ENCODE measurements at regions of chr3 and their contacts with region 1.

Region 1: DNA sequence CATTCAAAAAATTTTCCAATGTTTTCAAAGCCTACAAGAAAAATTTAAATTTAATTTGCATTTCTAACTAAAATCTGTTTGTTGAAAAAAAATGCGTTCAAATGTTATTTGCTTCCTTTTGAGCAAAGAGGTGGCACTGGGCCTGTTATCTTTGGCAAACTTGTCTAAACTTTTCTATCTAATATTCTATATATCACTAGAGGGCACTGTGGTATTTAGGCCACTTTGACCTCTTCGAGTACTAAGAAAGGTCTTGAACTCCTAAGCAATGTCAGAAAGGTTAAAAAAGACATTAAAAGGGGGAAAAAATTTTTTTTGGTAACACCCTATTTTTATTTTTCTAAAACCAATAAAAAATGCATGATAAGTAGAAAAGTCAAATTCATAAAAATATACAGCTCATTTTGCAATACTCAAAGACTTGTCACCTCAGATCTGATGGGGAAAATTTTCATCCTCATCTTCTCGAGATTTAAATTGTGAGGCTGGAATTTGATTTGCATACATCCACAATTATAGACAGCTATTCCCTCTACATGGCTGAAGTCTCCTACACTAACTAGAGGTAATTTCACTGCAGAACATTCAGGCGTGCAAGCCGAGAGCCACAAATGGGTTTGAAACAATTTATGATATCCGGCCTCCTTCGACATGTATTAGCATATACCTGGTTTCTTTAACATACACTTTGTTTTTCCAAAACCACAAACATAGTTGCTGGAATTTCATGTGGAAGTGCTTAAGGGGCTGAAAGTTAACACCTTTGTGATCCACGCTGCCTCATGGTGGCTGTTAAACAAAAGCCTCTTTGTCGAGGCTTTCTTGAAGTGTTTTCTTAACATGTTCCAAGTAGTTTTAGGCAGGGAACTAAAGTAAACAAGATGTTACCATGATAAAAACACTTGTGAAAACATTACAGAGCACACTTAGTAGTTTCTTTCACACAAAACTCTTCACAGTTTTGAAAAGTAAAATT is 576.4 kb downstream of the FOXP1 start:
- DNase-seq: peak in 2 of 3 donors; percentile 11 to 29
- H3K4me3 ChIP-seq: no peak overlapping the region
- H3K4me3 Mint-ChIP-seq: no peak overlapping the region
- H3K27ac ChIP-seq: no peak overlapping the region
- H3K27ac Mint-ChIP-seq: no peak overlapping the region
- H3K4me1 ChIP-seq: no peaks in the 10 kb centered on the region
- H3K4me1 Mint-ChIP-seq: peaks cover 4% of the 10 kb centered on the region
- H3K27me3 ChIP-seq: no peaks in the 10 kb centered on the region
- H3K27me3 Mint-ChIP-seq: no peaks in the 10 kb centered on the region
- CTCF ChIP-seq: peak; percentile 62

Region 2: DNA sequence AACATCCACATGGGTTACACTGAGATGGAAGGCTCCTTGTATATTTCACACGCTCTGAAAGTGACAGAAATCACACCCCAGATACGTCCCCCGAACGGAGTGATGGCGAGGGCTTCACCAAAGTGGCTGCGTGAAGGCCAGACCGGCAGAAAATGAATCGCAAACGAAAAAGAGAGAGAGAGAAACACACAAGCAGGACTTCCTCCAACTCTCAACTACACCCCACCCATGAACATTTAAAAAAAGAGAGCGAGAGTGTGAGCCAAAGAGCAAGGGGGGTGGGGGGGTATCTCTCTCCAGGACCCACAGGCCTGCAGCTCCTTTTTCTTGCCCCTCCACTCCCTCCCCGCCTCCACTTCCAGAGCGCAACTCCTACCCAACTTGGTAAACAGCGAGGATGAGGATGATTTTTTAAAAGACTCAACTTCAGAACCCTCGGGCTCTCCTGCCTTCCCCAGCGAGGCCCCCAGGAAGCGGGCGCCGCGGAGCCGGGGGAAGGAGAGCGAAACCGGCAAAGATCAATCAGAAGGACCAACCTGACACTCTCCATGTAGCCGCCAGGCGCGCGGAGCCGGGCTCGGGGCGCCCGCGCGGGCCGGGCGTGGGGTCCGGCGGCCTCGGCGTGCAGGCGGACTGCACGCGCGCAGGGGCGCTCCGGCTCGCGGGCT is 57.3 kb after region 1 on chr3:
- intact Hi-C with region 1: loop called (anchors 5 to 10 kb)
- DNase-seq: peak; percentile 14 to 32 (median 26)
- H3K4me3 ChIP-seq: peak overlapping the region; percentile 70 to 90 (median 79)
- H3K4me3 Mint-ChIP-seq: no peak overlapping the region
- H3K27ac ChIP-seq: peak overlapping the region; percentile 65 to 83
- H3K27ac Mint-ChIP-seq: no peak overlapping the region
- H3K4me1 ChIP-seq: peaks cover 41 to 50% of the 10 kb centered on the region in 2 donors
- H3K4me1 Mint-ChIP-seq: peaks cover 29% of the 10 kb centered on the region
- H3K27me3 ChIP-seq: no peaks in the 10 kb centered on the region
- H3K27me3 Mint-ChIP-seq: peaks cover 0 to 6% (median 4%) of the 10 kb centered on the region in 3 donors
- CTCF ChIP-seq: no peak

Region 3: DNA sequence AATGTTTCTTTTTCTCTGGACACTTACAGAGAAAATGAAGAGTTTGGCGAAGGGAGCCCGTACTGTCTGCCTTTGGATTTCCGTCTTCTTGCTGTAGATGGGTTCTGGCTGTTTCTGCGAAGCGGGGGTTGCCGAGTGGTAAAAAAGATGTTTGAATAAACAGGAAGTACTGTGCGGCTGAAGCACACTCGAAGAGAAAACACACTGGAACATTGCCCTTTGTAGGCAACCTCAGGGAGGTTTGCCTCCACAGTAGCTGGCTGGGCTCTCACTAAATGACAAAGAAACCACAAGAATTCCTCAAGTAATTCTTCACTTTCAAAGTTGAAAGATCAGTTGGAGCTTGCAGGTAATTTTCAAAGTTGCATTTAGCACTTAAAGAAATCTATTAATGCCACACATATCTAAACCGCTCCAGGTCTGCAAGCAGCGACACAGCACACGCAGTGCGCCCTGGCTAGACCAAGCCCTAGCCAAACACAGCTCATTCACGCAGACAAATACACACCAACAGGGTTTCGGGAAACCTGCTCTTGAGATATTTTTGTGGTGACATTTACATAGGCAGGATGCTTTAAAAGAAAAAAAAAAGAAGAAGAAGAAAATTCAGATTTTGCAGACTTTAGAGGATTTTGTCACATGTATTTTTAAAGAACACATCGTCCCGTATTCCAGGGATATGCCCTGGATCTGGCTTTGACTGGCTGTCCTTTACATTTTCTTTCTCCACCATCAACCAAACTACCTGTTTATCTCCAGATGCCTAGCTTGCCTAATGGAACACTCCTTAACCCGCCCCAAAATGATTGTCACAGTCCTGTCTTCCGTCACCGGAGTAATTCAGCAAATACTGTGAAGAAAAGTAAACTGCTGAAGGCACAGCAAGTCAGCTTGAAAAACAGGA is 123.6 kb after region 1 on chr3:
- intact Hi-C with region 1: no loop called
- DNase-seq: peak; percentile 38 to 60 (median 50)
- H3K4me3 ChIP-seq: peak overlapping the region; percentile 32 to 74 (median 71)
- H3K4me3 Mint-ChIP-seq: peak overlapping the region; percentile 76 to 88
- H3K27ac ChIP-seq: peak overlapping the region in 1 of 2 donors; percentile 52
- H3K27ac Mint-ChIP-seq: peak overlapping the region in 6 of 7 donors; percentile 43 to 77 (median 66)
- H3K4me1 ChIP-seq: peaks cover 20 to 22% of the 10 kb centered on the region in 2 donors
- H3K4me1 Mint-ChIP-seq: peaks cover 39% of the 10 kb centered on the region
- H3K27me3 ChIP-seq: no peaks in the 10 kb centered on the region
- H3K27me3 Mint-ChIP-seq: no peaks in the 10 kb centered on the region
- CTCF ChIP-seq: no peak

Region 4: DNA sequence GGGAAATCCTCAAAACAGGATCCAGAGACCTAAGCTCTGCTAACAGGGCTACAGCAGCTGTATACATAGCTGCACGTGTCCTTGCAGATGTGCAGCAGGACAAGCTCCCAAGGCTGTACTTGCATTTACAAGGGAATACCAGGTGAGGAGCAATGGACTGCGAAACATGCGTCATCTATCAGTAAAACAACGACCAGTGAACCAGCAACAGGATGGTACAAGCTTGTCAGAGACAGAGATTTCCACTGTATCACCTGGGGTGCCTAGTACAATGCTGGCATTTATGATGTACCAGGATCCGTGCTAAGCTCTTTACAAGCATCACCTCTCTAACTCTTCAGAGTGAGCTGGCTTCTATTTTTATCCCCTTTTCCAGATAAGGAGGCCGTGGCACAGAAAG is 349.2 kb after region 1 on chr3:
- intact Hi-C with region 1: no loop called
- DNase-seq: no peak
- H3K4me3 ChIP-seq: no peak overlapping the region
- H3K4me3 Mint-ChIP-seq: no peak overlapping the region
- H3K27ac ChIP-seq: peak overlapping the region in 1 of 2 donors; percentile 12
- H3K27ac Mint-ChIP-seq: no peak overlapping the region
- H3K4me1 ChIP-seq: no peaks in the 10 kb centered on the region
- H3K4me1 Mint-ChIP-seq: no peaks in the 10 kb centered on the region
- H3K27me3 ChIP-seq: no peaks in the 10 kb centered on the region
- H3K27me3 Mint-ChIP-seq: no peaks in the 10 kb centered on the region
- CTCF ChIP-seq: no peak

Measured in CD14-positive monocyte (primary cell).